ENCODE measurements at regions of chr7 and their contacts with region 1.

Region 1: DNA sequence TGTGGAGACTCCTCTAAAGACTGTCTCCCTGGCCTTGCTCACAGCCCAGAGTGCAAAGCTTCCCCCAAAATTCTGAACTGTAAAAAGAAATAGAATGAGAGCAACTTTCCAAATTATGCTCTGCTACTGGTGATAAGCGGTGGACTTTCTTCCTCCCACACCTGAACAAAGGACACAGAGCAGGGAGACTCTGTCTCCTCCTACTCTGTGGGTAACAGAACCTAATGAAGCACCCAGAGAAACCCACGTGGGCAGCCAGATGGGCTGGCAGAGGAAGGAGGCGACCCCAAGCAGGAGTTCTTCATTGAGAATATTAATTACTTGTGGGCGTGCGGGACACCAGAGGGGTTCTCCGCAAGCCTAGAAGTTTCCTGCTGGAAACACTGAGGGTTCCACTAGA is 139.5 kb downstream of the KMT2E start:
- H3K4me3 Mint-ChIP-seq: no peak overlapping the region
- H3K27ac Mint-ChIP-seq: no peak overlapping the region
- H3K4me1 Mint-ChIP-seq: peaks cover 6% of the 10 kb centered on the region
- H3K27me3 Mint-ChIP-seq: no peaks in the 10 kb centered on the region

Region 2: GRCh38 chr7:105118612-105119600 is 34.6 kb before region 1 on chr7:
- intact Hi-C with region 1: no loop called
- H3K4me3 Mint-ChIP-seq: no peak overlapping the region
- H3K27ac Mint-ChIP-seq: no peak overlapping the region
- H3K4me1 Mint-ChIP-seq: peaks cover 19% of the 10 kb centered on the region
- H3K27me3 Mint-ChIP-seq: no peaks in the 10 kb centered on the region

Region 3: GRCh38 chr7:105336009-105336408 is 182.5 kb after region 1 on chr7:
- intact Hi-C with region 1: loop called (anchors 2 kb)
- H3K4me3 Mint-ChIP-seq: no peak overlapping the region
- H3K27ac Mint-ChIP-seq: no peak overlapping the region
- H3K4me1 Mint-ChIP-seq: peaks cover 10% of the 10 kb centered on the region
- H3K27me3 Mint-ChIP-seq: no peaks in the 10 kb centered on the region

Region 4: GRCh38 chr7:105399043-105399725 is 245.7 kb after region 1 on chr7:
- intact Hi-C with region 1: loop called (anchors 1 kb)
- H3K4me3 Mint-ChIP-seq: no peak overlapping the region
- H3K27ac Mint-ChIP-seq: no peak overlapping the region
- H3K4me1 Mint-ChIP-seq: peaks cover 18% of the 10 kb centered on the region
- H3K27me3 Mint-ChIP-seq: peaks cover 4% of the 10 kb centered on the region